Head of caudate nucleus (tissue), 42 donors: ENCODE measurements at regions of chr16 and their contacts with region 1.

Region 1: DNA sequence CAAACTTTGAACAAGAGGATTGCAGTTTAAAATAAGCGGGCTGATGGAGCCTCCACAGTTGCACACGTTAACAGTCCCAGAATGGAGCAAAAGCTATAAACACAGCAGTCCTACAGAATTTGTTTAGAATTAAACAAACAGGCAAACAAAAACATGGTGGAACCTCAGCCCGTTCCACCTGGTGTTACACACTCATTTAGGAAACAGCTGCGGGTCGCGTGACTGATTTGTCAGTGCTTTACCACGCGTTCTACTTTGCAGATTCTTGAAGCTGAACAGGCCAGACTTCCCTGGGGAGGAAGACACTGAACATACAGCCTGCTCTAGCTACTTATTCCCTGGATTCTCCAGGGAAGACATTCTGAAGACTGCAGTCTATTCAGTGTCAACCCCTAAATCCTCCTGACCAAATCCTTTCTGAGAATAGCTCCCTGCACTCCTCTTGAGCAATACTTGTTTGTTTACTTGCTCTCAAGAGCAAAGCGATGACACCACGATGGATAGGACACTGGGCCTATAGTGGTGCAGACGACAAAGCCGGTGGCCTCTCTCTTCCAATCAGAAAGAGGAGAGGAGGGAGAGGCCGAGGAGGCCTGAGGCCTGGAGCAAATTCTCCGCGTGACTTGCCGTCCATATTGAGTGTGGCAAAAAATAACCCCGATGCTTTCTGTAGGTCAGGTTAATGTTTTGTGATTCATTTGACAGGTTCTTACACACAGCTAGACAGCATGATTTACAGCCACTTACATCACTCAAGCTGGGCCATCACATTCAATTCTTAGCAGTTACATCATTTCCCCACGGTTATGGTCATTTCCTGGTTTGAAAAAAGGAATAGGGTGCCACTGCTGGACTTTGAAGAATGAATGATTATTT is 4.0 kb upstream of the MAP1LC3B start:
- DNase-seq: peak; percentile 77 to 97 (median 94)

Region 2: DNA sequence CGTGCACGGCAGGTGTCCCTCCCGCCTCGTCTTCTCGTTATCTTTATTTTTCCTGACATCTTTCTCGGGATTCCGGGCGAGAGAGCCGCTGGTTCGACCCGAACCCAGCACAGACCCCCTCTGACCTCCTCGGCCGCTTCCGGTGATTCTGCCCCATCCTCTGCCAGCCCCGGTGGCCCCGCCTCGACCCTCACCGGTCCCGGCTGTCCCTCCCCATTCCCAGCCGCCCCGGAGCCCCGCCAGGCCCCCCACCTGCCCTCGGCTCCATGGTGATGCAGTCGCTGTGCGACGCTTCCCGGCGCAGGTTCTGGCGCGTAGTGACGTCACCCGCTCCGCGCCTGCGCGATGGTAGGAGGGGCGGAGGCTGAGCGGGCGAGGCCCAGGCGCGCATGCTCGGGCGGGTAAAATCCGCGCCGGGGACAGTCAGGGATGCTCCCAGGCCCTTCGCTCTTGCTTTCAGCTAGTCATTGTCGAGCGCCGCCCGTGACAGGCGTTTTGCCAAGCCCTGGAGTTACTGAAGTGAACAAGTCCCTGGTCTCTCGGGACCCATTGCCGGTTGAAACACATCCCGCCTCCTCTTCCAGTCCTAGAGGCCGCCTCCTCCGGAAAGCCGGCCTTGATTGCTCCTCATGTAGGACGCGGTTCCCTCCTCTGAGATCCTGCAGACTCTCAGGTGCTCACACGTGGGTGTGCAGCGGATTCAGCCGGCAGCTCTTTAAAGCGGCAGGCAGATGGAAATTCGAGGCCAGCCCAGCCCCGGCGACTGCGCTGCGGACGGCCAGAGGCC is 833.1 kb before region 1 on chr16 and contains the start of gene MTHFSD:
- intact Hi-C with region 1: loop called (anchors 10 kb)
- DNase-seq: peak; percentile 74 to 97 (median 92)

Region 3: DNA sequence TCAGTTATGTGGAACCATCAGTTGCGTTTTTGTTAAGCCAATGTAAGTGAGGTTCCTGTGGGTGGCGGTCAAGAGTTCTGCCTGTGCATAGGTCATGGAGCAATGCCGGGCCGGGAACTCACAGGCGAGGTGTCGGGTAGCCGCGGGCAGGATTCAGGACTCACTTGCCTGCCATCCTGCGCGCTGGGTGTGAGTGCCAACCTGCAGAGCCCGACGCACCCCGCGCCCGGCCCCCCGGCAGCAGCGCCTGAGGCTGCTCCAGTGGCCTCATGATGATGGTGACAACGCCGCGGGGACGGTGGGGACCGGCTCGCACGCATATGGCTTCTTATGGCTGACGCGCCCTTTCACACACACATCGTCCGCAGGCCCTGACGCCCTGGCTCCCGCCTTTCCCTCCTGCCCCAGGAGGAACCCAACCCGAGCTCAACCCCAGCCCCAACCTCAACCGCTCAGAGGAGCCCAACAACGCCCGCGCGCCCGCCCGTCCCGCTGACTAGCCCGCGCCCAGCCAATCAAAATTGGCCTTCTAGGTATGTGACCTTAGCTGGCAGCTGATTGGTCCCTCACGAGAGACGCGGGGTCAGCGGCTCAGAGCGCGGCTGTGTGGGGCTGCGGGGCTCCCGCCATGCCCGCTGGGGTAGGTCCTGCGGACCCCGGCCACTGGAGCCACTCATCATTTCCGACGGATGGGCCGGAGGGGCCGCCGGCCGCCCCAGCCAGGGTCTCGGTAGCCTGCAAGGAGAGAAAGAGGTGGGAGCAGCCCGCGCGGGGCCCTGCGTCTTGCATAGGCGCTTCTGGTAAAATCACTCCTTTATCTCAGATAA is 71.0 kb before region 1 on chr16 and contains the start of gene C16orf95:
- intact Hi-C with region 1: loop called (anchors 2 kb)
- DNase-seq: peak; percentile 94 to 99 (median 98)

Region 4: DNA sequence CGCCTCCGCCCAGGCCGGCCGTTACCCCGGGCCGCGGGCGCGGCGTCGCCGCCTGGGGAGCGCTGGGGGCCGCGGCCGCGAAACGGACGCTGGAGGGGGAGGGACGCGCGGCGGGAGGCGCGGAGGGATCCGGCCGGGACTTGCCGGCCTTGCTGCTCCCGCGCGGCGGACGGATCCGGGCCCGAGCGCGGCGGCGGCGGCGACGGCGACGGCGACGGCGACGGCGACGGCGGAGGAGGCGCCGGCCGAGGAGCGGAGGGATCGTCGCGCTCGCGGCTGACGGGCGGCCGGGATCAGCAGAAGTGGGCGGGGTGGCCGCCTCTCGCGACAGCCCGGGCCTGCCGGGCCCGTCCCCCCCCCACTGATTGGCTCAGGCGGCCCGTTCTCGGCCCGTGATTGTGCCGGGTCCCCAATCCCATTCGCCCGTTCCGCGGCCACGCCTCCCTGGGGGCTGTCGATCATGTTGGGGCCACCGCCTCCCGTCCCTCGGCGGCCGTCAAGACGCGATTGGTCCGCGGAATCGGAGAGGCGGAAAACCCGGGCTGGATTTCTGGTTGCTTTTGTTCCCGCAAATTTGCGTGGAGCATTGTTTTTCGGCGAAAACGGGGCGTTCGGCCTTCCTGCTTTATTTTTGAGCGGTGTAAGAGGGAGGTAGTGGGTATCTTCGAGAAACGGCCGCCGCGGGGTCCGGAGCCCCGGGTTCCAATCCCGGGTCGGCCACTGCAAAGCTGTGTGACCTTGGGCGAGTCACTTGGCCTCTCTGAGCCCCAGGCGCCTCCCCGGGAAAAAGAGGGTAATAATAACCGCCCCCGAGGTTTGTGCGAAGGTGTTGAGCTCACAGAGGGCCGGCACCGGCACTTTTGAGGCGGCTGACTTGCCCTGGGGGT is 104.8 kb after region 1 on chr16 and contains the start of gene ZCCHC14:
- intact Hi-C with region 1: loop called (anchors 5 kb)
- DNase-seq: peak; percentile 97 to 100 (median 99)

Region 5: GRCh38 chr16:87636072-87636684 is 248.0 kb after region 1 on chr16:
- intact Hi-C with region 1: loop called (anchors 10 kb)
- DNase-seq: peak; percentile 61 to 94 (median 86)